ENCODE measurements at regions of chr15 and their contacts with region 1.

Region 1: GRCh38 chr15:97903971-97904572 is 56.4 kb upstream of the ARRDC4 start:
- DNase-seq: peak; percentile 74 to 83
- ATAC-seq: peak; percentile 75 to 91 (median 88)
- H3K4me3 ChIP-seq: no peak overlapping the region
- H3K27ac ChIP-seq: no peak overlapping the region
- H3K4me1 ChIP-seq: no peaks in the 10 kb centered on the region
- H3K27me3 ChIP-seq: peaks cover 0 to 41% (median 4%) of the 10 kb centered on the region in 3 donors
- CTCF ChIP-seq: peak; percentile 63

Region 2: DNA sequence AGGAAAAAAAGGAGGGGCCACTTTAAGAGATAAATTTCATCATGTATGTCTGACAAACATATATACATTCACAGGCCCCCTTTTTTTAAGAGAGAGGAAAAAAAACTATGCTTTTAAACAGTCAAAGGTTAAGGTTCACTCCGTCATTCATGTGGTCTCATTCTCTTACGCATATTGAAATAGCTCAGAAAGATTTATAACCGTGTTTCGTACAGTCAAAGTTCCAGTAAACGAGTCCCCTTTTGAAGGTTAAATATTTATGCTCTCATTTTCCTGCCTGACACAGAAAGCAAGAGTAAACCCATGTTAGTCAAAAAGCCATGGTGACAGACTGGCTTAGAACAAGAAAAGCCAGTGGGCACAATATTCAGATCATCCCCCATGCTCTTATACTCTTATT is 191.5 kb before region 1 on chr15:
- intact Hi-C with region 1: no loop called
- DNase-seq: no peak
- ATAC-seq: no peak
- H3K4me3 ChIP-seq: no peak overlapping the region
- H3K27ac ChIP-seq: no peak overlapping the region
- H3K4me1 ChIP-seq: no peaks in the 10 kb centered on the region
- H3K27me3 ChIP-seq: no peaks in the 10 kb centered on the region
- CTCF ChIP-seq: no peak

Region 3: GRCh38 chr15:97858296-97858695 is 45.8 kb before region 1 on chr15:
- intact Hi-C with region 1: no loop called
- DNase-seq: no peak
- ATAC-seq: no peak
- H3K4me3 ChIP-seq: no peak overlapping the region
- H3K27ac ChIP-seq: no peak overlapping the region
- H3K4me1 ChIP-seq: no peaks in the 10 kb centered on the region
- H3K27me3 ChIP-seq: no peaks in the 10 kb centered on the region
- CTCF ChIP-seq: no peak

Region 4: GRCh38 chr15:98177924-98178592 is 274.0 kb after region 1 on chr15:
- intact Hi-C with region 1: loop called (anchors 5 kb)
- DNase-seq: no peak
- ATAC-seq: peak in 3 of 4 donors; percentile 68 to 73 (median 71)
- H3K4me3 ChIP-seq: no peak overlapping the region
- H3K27ac ChIP-seq: no peak overlapping the region
- H3K4me1 ChIP-seq: no peaks in the 10 kb centered on the region
- H3K27me3 ChIP-seq: peaks cover 2 to 18% (median 3%) of the 10 kb centered on the region in 3 donors
- CTCF ChIP-seq: peak; percentile 55

Region 5: DNA sequence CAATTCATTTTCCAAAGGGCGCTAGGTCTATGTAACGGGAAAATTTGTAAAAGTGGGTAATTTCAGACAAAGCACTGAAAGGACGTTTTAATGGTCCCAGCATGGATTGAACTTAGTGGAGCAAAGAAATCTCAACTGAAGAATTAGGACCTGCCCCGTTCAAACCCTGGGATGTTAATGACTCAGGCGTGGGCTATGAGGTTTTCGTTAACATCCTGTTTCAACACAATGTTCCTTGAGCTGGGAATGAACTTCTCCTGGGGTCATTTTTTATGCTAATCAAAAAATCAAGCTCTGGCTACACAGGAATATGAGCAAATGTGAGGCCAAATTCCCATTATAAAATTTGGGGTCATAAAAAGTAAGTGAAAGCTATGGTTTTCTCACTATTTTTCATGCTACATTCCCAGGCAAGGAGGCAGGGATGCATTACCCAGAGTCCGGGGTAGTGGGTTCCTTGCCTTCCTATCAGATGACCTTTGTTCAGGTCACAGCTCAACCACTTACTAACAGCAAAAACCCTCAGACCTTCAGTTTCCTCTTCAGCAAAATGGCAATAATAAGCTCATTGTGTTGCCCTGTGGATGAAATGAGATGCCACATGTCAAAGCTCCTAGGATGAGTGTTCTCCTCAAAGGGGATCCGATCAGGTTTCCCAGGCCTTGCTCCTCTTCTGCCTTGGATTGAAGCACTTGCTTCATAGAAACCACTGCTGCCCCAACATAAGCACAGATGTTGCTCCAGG is 327.8 kb after region 1 on chr15:
- intact Hi-C with region 1: no loop called
- DNase-seq: no peak
- ATAC-seq: no peak
- H3K4me3 ChIP-seq: no peak overlapping the region
- H3K27ac ChIP-seq: no peak overlapping the region
- H3K4me1 ChIP-seq: no peaks in the 10 kb centered on the region
- H3K27me3 ChIP-seq: peaks cover 0 to 2% (median 0%) of the 10 kb centered on the region in 3 donors
- CTCF ChIP-seq: no peak

Region 6: GRCh38 chr15:98421419-98422129 is 517.5 kb after region 1 on chr15:
- intact Hi-C with region 1: loop called (anchors 5 to 10 kb)
- DNase-seq: peak; percentile 73 to 84
- ATAC-seq: peak; percentile 70 to 91 (median 78)
- H3K4me3 ChIP-seq: peak overlapping the region; percentile 44
- H3K27ac ChIP-seq: no peak overlapping the region
- H3K4me1 ChIP-seq: peaks cover 7% of the 10 kb centered on the region
- H3K27me3 ChIP-seq: peaks cover 0 to 42% (median 8%) of the 10 kb centered on the region in 3 donors
- CTCF ChIP-seq: peak; percentile 99

Measured in psoas muscle (tissue), 8 donors.